AG04449 (cell line): ENCODE measurements at regions of chr20 and their contacts with region 1.

Region 1: DNA sequence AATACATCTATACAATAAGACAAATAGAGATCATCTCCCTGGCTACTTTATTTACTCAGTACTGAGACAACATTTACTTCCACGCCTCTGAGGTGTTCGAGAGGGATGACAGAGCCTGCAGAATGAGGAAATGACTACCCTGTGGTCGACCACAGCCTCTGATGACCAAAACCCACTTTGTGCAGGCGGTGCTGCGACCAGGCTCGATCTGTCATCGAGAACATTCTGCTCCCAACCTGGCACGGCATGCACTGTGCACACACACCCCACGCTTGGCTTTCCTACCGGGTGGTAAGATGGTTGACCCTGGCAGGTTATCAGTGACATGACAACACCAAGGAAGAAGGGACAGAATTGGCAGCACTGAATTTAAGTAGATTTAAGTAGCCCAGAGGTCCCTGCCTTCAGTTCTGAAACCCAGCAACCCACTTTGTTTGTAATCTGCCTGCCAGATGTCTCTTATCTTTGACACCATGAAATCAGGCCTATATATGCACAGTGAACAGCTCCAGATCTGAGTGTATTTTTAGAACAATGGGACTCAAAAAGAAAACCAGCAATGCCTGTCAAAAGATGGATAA is 42.6 kb downstream of the TTI1 start:
- DNase-seq: no peak
- H3K4me3 ChIP-seq: no peak overlapping the region
- CTCF ChIP-seq: no peak

Region 2: GRCh38 chr20:37755665-37756064 is 235.0 kb before region 1 on chr20:
- CTCF ChIA-PET with region 1: interaction called, 20 read pairs
- POLR2A ChIA-PET with region 1: interaction called, 3 read pairs
- DNase-seq: no peak
- H3K4me3 ChIP-seq: no peak overlapping the region
- CTCF ChIP-seq: peak; percentile 57

Region 3: DNA sequence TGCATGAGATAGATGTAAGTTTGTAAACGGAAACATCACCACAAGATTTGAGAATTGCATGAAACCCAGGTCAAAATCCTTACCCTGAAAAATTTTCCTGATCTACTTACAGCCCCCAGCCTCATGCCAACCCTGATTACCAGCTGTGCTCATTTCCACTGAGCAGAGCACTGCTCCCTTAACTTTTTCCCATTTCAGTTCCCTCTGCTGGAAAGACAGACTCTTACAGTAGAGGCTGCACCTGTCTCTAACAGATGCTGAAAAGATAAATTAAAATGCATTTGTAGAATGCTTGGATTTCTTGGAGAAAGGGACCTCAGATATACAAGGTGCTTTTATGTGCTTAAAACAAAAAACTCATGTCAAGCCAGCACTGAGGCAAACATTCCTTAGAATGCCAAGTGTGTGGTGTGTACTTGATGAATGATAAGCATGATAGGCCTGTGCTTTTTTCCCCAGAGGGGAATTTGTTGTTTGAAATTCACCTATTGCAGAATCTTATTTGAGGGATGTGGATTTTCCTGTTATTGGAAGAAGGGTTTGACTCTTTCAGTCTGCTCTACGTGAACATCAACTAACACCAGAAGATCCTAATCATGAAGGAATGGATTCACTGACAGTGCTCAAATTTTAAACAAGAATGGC is 13.6 kb after region 1 on chr20:
- CTCF ChIA-PET with region 1: interaction called, 14 read pairs
- POLR2A ChIA-PET with region 1: interaction called, 3 read pairs
- DNase-seq: no peak
- H3K4me3 ChIP-seq: no peak overlapping the region
- CTCF ChIP-seq: no peak